ENCODE measurements at regions of chr2 and their contacts with region 1.

Region 1: DNA sequence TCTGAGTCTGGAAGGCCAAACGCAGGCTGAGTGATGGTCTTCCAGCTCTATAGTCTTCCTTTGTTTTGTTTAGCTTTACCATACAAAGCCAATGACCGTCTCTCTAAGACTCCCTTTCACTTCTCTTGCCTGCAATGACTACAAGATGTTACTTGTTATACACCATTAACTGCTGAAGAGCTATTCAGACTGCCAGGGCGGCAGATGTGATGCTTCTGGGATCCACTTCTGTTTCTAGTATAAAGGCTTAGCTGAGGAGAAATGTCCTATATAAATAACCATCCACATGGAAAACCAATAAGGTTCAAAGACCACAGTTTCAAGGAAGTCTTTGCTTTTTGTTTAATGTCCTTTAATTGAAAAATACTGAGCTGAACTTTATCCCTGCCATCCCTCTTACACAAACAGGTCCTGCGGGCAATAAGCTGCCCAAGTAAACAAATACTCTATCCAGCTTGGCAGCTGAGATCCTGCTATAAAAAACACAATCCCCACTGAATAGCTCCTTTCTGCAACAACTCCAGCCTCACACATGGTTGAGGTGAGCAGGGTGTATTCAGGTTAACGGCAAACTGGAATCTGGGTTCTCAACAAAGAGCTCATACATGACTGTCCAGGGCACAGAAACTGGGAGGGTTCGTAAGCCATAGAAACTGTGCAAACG is 124.6 kb downstream of the VIT start:
- DNase-seq: no peak
- ATAC-seq: no peak
- H3K4me3 Mint-ChIP-seq: no peak overlapping the region
- H3K27ac Mint-ChIP-seq: no peak overlapping the region
- H3K4me1 Mint-ChIP-seq: peaks cover 19% of the 10 kb centered on the region
- H3K27me3 Mint-ChIP-seq: no peaks in the 10 kb centered on the region
- CTCF ChIP-seq: no peak

Region 2: GRCh38 chr2:36835125-36835524 is 14.1 kb after region 1 on chr2:
- CTCF ChIA-PET with region 1: interaction called, 11 read pairs
- POLR2A ChIA-PET with region 1: interaction called, 4 read pairs
- DNase-seq: no peak
- ATAC-seq: peak; percentile 17; the same call in 1 of the 2 replicates
- H3K4me3 Mint-ChIP-seq: 0 out of 2 replicates have a peak overlapping the region, but pooled peaks have one; percentile 0
- H3K27ac Mint-ChIP-seq: peak overlapping the region; percentile 96
- H3K4me1 Mint-ChIP-seq: peaks cover 39% of the 10 kb centered on the region
- H3K27me3 Mint-ChIP-seq: no peaks in the 10 kb centered on the region
- CTCF ChIP-seq: no peak

Region 3: DNA sequence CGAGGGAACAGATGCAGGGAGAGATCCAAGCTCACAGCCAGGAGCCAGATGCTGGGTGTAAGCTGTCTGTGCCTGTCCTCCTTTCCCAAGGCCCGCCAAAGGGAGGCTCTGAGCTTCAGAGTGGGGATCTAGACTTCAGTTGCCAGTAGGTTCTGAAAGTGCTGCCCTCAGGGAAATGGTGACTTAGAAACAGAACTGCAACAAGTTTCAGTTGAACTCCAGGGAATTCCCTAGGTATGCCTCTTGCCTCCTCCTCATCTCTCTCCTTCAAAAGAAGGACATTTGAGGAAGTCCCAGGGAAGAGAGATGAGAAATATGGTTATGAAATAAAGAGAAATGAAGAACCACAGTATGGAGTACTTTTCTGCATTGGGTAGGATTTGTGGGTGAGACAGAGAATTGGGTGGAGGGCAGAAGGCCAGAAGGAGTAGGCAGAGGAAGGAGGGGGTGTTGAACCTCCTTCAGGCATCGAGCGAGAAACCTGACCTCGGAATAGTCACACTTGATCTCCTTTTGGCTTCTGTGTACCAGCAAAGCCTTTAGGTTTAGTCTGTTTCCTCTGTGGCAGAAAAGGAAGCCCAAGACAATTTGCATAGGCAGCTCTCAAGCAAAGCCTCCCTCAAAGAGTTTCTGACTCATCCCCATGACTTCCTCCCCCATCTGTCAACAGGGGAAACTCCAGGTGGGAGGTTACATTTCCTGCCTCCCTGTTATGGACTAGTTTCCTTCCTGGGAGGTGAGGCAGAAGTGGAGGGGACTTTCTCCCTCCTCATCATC is 569.1 kb after region 1 on chr2:
- CTCF ChIA-PET with region 1: no interaction called
- POLR2A ChIA-PET with region 1: no interaction called
- DNase-seq: no peak
- ATAC-seq: peak; percentile 93
- H3K4me3 Mint-ChIP-seq: no peak overlapping the region
- H3K27ac Mint-ChIP-seq: peak overlapping the region; percentile 85
- H3K4me1 Mint-ChIP-seq: no peaks in the 10 kb centered on the region; the same call in 1 of the 2 replicates
- H3K27me3 Mint-ChIP-seq: no peaks in the 10 kb centered on the region
- CTCF ChIP-seq: no peak

Measured in WTC11 (cell line).